B cell (primary cell): ENCODE measurements at regions of chr10 and their contacts with region 1.

Region 1: GRCh38 chr10:103350501-103351260 is at the start of gene PCGF6:
- DNase-seq: peak; percentile 86
- ATAC-seq: peak; percentile 86
- H3K4me3 ChIP-seq: peak within 1 kb of the TSS; percentile 71 to 85 (median 80)
- H3K4me3 Mint-ChIP-seq: peak within 1 kb of the TSS; percentile 89
- H3K27ac ChIP-seq: peak within 1 kb of the TSS; percentile 25 to 66
- H3K27ac Mint-ChIP-seq: peak within 1 kb of the TSS; percentile 82
- H3K4me1 ChIP-seq: peaks cover 9 to 13% of the 10 kb centered on the region in 2 donors
- H3K4me1 Mint-ChIP-seq: peaks cover 6% of the 10 kb centered on the region
- H3K27me3 ChIP-seq: no peaks in the 10 kb centered on the region
- H3K27me3 Mint-ChIP-seq: no peaks in the 10 kb centered on the region
- CTCF ChIP-seq: no peak
- total RNA-seq, gene PCGF6: 7.4 and 8.9 TPM in 2 replicates

Region 2: DNA sequence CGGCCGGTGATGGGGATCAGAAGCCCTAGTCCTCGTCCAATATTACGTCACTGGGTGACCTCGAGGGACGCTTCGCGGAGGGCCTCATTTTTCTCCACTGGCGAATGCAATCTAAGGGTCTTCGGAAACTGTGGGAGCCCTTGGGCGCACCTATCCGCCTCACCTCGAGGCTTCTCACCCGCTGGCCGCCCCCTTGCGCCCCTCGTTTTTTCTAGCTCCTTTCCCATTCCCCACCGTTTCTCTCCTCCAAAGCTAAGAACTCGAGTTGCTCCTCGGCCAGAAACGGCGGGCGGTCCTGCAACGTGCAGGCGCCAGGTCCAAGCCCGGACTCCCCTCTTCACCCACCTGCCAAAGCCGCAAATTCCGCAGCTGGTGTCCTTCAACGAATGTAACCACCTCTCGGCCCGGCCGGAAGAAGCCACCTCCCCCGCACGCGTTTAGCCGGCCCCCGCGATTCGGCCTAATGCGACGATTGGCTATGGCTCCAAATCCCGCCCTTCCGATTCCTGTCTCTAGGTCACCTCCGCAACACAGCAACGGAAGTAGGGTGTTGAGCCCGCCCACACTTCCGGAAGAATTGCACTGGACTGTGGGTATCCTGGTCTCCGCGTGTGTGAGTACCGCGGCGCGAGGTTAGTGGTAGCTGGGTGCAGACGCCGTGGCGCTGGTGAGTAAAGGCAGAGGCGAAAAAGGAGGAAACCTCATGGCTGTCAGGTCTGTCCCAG is 45.5 kb after region 1 on chr10 and contains the starts of genes ATP5MK and PDCD11:
- CTCF ChIA-PET with region 1: no interaction called
- POLR2A ChIA-PET with region 1: no interaction called
- intact Hi-C with region 1: loop called (anchors 1 kb)
- DNase-seq: peak; percentile 95
- ATAC-seq: peak; percentile 98
- H3K4me3 ChIP-seq: peak within 1 kb of the TSS; percentile 68 to 92 (median 76)
- H3K4me3 Mint-ChIP-seq: peak within 1 kb of the TSS; percentile 97
- H3K27ac ChIP-seq: peak within 1 kb of the TSS; percentile 38 to 64
- H3K27ac Mint-ChIP-seq: peak within 1 kb of the TSS; percentile 89
- H3K4me1 ChIP-seq: peaks cover 22 to 23% of the 10 kb centered on the region in 2 donors
- H3K4me1 Mint-ChIP-seq: peaks cover 44% of the 10 kb centered on the region
- H3K27me3 ChIP-seq: no peaks in the 10 kb centered on the region
- H3K27me3 Mint-ChIP-seq: no peaks in the 10 kb centered on the region
- CTCF ChIP-seq: no peak
- total RNA-seq, gene ATP5MK: 96.6 and 107 TPM in 2 replicates
- total RNA-seq, gene PDCD11: 36.4 and 42.3 TPM in 2 replicates